ENCODE measurements at regions of chr17 and their contacts with region 1.

Region 1: GRCh38 chr17:50200457-50201275 is 765 bp downstream of the COL1A1 start:
- DNase-seq: peak; percentile 87
- H3K4me3 Mint-ChIP-seq: peak overlapping the region; percentile 71
- H3K27ac Mint-ChIP-seq: no peak overlapping the region
- H3K4me1 Mint-ChIP-seq: peaks cover 23% of the 10 kb centered on the region
- H3K27me3 Mint-ChIP-seq: peaks cover 95% of the 10 kb centered on the region

Region 2: GRCh38 chr17:49971848-49972485 is 228.7 kb before region 1 on chr17:
- CTCF ChIA-PET with region 1: no interaction called
- DNase-seq: no peak
- H3K4me3 Mint-ChIP-seq: no peak overlapping the region
- H3K27ac Mint-ChIP-seq: no peak overlapping the region
- H3K4me1 Mint-ChIP-seq: peaks cover 25% of the 10 kb centered on the region
- H3K27me3 Mint-ChIP-seq: peaks cover 99% of the 10 kb centered on the region

Region 3: DNA sequence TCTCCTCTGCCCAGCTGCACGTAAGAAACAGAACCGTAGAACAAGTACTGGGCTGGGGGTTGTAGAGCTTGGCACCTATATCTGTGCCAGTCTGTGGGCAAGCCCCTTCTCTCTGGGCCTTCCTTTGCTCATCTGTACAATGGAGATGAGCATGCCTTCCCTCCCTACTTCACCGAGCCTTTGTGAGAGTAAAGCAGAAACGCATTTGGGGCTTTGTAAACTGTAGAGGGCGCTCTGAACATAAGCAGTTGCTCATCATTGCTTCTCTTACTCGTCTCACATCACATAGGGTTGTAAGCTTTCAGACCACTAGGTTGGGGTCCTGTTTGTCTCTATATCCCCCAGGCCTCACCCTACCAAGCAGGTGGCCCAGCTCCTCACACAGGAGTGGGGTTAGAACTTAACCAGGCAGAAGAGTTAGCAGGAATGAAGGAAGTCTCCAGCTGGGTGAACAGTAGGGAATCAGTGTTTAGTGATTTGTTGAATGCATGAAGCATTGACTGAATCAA is 85.8 kb before region 1 on chr17:
- CTCF ChIA-PET with region 1: interaction called, 27 read pairs
- DNase-seq: peak; percentile 68
- H3K4me3 Mint-ChIP-seq: no peak overlapping the region
- H3K27ac Mint-ChIP-seq: no peak overlapping the region
- H3K4me1 Mint-ChIP-seq: peaks cover 11% of the 10 kb centered on the region
- H3K27me3 Mint-ChIP-seq: peaks cover 69% of the 10 kb centered on the region

Region 4: DNA sequence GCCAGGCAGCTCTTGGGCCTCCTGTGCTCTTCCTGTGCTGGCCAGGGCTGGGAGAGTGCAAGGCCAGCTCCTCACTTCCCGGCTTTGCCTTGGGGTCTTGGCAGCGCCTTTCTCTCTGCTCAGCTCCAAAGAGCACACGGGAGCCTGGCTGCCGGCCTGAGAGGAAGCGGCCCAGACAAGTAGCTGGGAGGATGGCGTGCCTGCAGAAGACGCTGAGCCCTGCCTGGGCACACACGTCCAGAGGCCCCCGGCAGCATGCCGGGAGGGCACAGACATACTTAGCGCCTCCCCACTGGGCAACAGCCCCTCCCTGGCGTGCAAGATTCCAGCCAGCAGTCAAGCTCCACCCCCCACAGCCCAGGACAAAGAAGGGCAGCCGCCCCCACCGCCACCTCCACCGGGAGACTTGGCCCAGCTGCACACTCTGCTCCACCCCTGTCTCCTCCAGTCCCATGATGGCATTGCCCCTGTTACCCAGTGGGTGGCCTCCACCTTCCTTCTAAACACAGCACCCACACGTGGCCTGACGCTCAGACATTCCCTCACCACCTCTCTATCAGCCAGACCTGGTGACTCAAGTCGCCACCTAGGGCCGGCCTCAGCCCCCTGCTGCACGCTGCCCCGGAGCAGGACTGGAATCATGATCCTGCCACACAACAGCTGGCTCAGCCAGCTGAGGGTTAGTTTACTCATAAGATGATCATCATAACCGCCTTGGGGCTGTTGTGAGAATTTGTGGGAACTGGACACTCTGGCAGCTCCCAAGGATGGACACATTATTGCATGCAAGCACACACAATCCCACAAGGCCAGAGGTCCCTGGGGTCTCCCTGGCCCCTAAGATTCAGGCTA is 22.5 kb before region 1 on chr17:
- CTCF ChIA-PET with region 1: interaction called, 100 read pairs
- DNase-seq: peak; percentile 63
- H3K4me3 Mint-ChIP-seq: no peak overlapping the region
- H3K27ac Mint-ChIP-seq: no peak overlapping the region
- H3K4me1 Mint-ChIP-seq: peaks cover 20% of the 10 kb centered on the region
- H3K27me3 Mint-ChIP-seq: peaks cover 64% of the 10 kb centered on the region

Region 5: GRCh38 chr17:50238601-50239280 is 38.1 kb after region 1 on chr17:
- CTCF ChIA-PET with region 1: no interaction called
- DNase-seq: no peak
- H3K4me3 Mint-ChIP-seq: no peak overlapping the region
- H3K27ac Mint-ChIP-seq: no peak overlapping the region
- H3K4me1 Mint-ChIP-seq: no peaks in the 10 kb centered on the region
- H3K27me3 Mint-ChIP-seq: peaks cover 45% of the 10 kb centered on the region

Region 6: DNA sequence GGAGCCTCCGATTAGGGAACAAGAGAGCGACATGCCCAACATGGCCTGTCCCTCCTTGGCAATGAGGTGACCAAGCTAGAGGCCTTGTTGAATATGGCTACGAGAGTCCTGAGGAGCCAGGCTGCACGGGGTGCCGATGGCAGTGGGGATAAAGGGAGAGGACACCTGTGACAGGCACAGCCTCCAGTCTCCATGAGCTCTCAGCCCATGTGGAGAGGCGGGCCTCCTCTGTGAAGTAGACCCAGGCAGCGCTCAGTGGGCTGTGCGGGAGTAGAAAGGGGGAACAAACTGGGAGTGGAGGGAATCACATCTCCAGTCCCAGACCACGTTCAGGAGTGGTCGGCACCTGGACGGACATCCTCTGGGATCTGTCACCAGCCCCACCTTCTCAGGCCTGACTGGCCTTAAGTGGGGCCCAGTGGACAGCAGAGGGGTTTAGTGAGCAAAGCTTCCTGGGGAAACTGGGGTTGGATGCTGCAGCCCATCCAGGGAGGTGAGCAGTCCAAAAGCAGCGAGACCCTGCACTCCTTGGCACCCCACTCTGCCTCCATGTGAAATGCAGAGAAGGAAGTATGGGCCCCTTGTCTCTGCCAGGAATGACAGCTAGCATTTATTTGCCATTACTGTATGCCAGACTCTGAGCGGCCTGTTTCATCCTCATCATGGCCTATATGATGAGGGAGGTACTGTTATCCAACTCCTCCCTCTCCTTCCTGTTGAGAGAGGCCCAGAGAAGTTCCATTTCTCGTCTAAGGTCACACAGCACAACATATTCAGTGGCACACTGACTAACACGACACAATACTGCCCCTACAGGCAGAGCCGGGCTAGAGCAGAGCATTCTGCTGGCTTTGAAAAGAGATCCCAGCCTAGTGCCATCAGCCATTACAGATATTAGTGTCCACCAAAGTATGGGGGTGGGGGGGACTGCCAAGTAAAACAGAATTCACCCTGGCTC is 69.1 kb after region 1 on chr17:
- CTCF ChIA-PET with region 1: interaction called, 91 read pairs
- DNase-seq: peak; percentile 81
- H3K4me3 Mint-ChIP-seq: no peak overlapping the region
- H3K27ac Mint-ChIP-seq: no peak overlapping the region
- H3K4me1 Mint-ChIP-seq: peaks cover 14% of the 10 kb centered on the region
- H3K27me3 Mint-ChIP-seq: peaks cover 63% of the 10 kb centered on the region

Region 7: GRCh38 chr17:50297407-50297865 is 96.8 kb after region 1 on chr17:
- CTCF ChIA-PET with region 1: interaction called, 217 read pairs
- DNase-seq: peak; percentile 85
- H3K4me3 Mint-ChIP-seq: no peak overlapping the region
- H3K27ac Mint-ChIP-seq: no peak overlapping the region
- H3K4me1 Mint-ChIP-seq: no peaks in the 10 kb centered on the region
- H3K27me3 Mint-ChIP-seq: peaks cover 30% of the 10 kb centered on the region

Measured in activated naive CD4-positive, alpha-beta T cell treated with anti-CD3 and anti-CD28 coated beads, Interleukin-2, amount 10 ng/mL, durations not matched to agents 7 days and 5 days (primary cell).